Posterior vena cava (tissue), 2 donors: ENCODE measurements at regions of chr11 and their contacts with region 1.

Region 1: GRCh38 chr11:62245271-62245753 is 3.3 kb downstream of the SCGB1D2 start:
- DNase-seq: no peak

Region 2: DNA sequence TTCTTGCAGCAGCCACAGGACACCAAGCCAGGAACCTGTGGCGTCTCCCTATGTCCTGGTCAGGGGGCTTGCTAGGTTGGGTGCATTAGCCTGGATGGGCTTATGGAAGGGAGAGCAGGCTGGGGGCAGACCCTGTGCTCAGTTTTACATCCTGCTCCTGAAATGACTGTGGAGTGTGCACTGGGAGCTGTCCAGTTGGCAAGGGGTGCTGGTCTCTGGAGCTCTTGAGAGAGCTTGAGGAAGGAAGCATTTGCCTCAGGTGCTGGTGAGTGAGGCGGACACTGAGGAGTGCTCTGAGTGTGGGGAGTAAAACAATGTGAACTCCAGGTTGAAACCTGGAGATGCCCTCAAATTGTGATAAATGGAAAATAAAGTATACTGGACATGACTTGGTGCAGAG is 50.2 kb after region 1 on chr11:
- intact Hi-C with region 1: loop called in 1 of 2 experiments (anchors 2 kb)
- DNase-seq: no peak

Region 3: GRCh38 chr11:64060861-64061444 is 1815.6 kb after region 1 on chr11:
- intact Hi-C with region 1: no loop called
- DNase-seq: no peak